Heart left ventricle (tissue), 16 donors: ENCODE measurements at regions of chrX and their contacts with region 1.

Region 1: DNA sequence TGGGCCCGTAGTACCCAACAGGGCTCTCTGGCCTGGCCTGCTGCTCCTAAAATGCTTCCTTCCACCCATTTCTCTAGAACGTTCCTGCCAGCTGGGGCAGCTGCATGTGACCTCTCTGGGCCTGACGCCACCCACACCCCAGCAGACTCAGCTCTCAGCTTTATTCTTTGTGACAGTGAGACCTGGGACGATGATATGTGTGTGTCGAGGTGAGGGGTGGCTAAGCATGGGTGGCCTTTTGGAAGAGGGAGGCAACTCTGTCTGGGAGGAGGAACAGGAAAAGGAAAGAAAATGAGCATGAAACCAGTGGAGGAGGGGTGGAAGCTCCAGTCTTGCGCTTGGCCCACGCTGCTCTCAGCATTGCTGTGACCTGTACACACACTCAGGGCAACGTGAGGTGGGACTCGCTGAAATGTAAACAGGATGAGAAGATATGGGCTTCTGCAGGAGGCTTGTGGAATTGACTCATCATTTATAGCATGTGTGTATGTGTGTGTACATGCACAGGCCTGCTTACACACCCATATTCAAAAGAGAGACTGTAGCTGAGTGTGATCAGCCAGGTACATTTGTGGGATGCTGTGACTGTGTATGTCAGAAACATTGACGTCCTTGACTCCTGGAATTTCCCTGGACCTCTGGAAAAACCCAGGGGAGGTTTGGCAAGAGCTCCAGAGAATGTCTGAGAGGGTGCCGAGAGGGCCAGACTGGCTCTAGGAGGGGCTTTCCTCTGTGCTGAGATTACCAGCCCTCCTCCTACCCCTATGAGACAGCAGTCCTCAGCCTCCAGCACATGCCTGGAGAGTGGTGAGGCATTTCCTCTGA is 137.9 kb downstream of the PJA1 start:
- DNase-seq: no peak
- ATAC-seq: peak in 1 of 4 donors; percentile 71
- H3K4me3 ChIP-seq: no peak overlapping the region
- H3K27ac ChIP-seq: peak overlapping the region in 1 of 12 donors; percentile 1
- H3K4me1 ChIP-seq: peaks cover 0 to 34% (median 12%) of the 10 kb centered on the region in 12 donors
- H3K27me3 ChIP-seq: peaks cover 0 to 5% (median 0%) of the 10 kb centered on the region in 9 donors
- CTCF ChIP-seq: no peak
- POLR2A ChIP-seq: no peak

Region 2: DNA sequence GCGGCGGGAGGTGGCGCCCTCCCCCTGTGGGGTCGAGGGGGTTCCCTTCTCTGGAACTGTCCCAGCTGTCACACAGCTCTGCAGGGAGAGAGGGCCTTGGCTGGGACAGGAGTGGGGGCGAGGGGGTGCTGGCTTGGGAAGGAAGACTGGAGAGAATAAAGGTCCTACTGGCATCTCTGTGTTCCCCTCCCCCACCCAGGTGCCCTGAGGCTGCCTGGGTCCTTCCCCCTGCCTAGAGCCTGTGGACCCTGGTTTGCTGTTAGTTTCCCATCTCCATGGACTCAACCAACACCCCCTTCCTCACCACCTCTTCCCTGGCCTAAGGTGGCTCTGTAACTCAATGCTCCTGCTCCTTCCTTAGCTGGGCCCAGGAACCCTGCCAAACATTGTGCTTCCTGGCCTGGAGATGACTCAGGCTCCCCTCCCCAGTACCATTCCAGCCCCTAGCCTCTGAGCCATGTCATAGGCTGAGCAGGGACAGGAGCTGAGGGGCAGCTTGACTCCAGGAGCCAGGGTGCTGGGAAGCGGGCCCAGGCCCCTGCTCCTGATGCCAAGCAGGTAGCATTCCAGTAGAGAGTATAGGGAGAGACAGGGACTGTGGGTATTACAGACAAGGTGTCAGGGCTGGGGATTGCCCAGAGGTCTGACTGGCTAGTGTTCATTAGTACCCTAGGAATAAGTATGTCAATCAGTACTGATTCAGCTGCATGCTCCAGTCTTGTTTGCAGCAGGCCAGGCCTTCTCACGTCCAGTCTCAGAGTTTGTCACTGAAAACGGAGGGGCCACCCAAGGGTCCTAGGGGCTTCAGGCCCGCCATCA is 97.9 kb before region 1 on chrX:
- intact Hi-C with region 1: loop called in 1 of 10 experiments (anchors 10 kb)
- DNase-seq: peak; percentile 26 to 77 (median 54)
- ATAC-seq: peak in 3 of 4 donors; percentile 68 to 74 (median 68)
- H3K4me3 ChIP-seq: no peak overlapping the region
- H3K27ac ChIP-seq: peak overlapping the region in 11 of 12 donors; percentile 27 to 87 (median 56)
- H3K4me1 ChIP-seq: peaks cover 0 to 47% (median 14%) of the 10 kb centered on the region in 12 donors
- H3K27me3 ChIP-seq: no peaks in the 10 kb centered on the region
- CTCF ChIP-seq: no peak
- POLR2A ChIP-seq: peak in 1 of 2 donors; percentile 16

Region 3: GRCh38 chrX:68989865-68990606 is 37.4 kb before region 1 on chrX:
- intact Hi-C with region 1: no loop called
- DNase-seq: peak; percentile 41 to 63 (median 48)
- ATAC-seq: peak; percentile 72 to 87 (median 80)
- H3K4me3 ChIP-seq: no peak overlapping the region
- H3K27ac ChIP-seq: peak overlapping the region in 7 of 12 donors; percentile 20 to 57 (median 33)
- H3K4me1 ChIP-seq: peaks cover 0 to 34% (median 12%) of the 10 kb centered on the region in 12 donors
- H3K27me3 ChIP-seq: peaks cover 0 to 11% (median 0%) of the 10 kb centered on the region in 9 donors
- CTCF ChIP-seq: no peak
- POLR2A ChIP-seq: no peak